ENCODE measurements at regions of chr7 and their contacts with region 1.

Region 1: GRCh38 chr7:50467817-50468610 is 17.9 kb upstream of the FIGNL1 start:
- DNase-seq: peak; percentile 85
- H3K4me3 Mint-ChIP-seq: no peak overlapping the region
- H3K27ac Mint-ChIP-seq: no peak overlapping the region
- H3K4me1 Mint-ChIP-seq: peaks cover 13% of the 10 kb centered on the region
- H3K27me3 Mint-ChIP-seq: peaks cover 1% of the 10 kb centered on the region

Region 2: DNA sequence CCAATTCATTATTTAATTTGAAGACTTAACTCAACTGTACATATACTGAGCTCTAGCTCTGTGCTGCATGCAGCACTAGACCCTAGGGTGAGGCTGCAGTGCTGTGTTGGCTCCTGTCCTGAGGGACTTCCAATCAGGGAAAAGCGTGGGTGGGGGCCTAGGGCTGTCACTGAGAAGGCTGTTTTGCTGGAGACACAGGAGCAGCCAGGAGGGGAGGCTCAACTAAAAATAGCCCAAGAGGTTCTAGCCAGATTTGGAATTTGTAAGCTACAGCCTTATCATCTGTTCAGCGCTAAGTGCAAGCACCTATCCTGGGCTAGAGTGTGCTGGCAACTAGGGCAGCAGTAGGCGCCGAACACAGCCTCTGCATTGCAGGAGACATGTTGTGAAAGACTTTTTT is 573.5 kb before region 1 on chr7:
- CTCF ChIA-PET with region 1: no interaction called
- POLR2A ChIA-PET with region 1: no interaction called
- DNase-seq: no peak
- H3K4me3 Mint-ChIP-seq: no peak overlapping the region
- H3K27ac Mint-ChIP-seq: no peak overlapping the region
- H3K4me1 Mint-ChIP-seq: no peaks in the 10 kb centered on the region
- H3K27me3 Mint-ChIP-seq: no peaks in the 10 kb centered on the region

Region 3: DNA sequence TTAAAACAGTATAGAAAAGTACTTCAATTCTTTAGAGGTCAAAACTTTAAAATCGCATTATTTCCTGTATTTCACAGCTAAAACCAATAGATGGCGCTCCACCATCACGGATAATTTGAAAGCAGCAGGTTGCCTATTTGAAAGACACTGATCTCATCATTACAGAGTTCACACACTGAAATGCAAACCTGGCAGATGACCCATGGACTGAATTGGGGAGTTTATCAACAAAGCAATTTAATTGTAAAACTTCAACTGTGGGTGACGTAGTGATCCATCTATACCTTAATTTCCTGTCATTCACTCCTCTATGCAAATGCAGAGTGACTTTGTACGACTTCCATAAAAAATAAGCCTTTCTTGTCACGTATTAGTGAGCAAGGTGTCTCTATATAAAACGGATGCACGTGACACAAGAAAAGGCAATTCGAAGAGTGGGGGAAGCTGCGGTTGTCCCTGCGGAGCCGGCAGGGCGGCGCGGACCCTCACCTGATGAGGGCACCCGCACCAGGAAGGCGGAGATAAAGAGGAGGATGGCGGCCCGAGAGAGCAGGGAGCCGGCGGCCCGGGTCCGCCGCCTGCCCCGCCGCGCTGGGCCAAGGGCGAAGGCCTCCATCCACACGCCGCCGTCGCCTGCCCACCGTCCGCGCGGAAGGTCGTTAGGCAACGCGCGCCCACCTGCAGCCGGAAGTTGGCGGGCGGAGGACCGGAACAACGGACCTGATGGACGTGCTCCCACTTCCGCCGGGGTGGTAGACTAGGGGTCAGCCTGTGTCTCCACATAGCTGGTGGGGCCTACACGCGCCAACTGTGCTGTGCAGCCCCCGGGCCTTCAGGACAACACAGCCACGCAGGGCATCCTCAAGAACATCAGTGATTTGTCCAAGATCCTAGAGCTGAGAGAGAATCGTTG is 375.2 kb before region 1 on chr7 and contains the start of gene ZPBP:
- CTCF ChIA-PET with region 1: interaction called, 25 read pairs
- POLR2A ChIA-PET with region 1: no interaction called
- DNase-seq: peak; percentile 43
- H3K4me3 Mint-ChIP-seq: peak within 1 kb of the TSS; percentile 73
- H3K27ac Mint-ChIP-seq: peak within 1 kb of the TSS; percentile 47
- H3K4me1 Mint-ChIP-seq: peaks cover 4% of the 10 kb centered on the region
- H3K27me3 Mint-ChIP-seq: peaks cover 19% of the 10 kb centered on the region
- total RNA-seq, gene ZPBP: not detected

Region 4: DNA sequence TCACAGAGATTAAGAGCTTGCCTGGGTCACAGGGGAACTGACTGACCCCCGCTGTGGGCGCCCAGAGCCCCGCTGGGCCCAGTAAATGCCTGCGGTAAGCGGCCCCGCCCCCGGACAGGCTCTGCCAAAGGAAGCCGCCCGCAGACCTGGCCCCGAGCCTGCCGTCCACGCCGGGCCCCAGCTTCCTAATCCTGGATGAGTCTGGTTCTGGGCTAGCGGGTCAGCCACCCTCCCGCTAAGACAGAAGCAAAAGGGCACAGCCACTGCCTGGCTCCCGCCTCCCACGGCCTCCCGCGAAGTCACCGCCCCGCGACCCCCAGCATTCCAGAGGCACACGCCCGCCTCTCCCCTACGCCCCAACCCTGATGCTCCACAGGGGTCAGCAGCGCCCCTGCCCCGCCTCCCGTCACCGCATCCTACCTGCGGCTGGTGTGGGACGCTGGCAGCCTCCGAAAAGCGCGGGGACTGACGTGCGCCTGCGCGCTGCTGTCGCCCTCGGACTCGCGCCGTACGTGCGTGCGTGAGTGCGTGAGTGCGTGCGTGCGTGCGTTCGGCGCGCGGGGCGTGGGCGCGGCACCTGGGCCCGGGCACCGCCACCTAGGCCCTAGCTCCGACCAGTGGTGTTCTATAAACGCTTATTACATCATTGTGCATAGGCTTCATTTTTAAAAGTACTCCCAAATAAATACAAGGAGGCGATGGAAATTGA is 18.0 kb before region 1 on chr7 and contains the start of gene FIGNL1:
- CTCF ChIA-PET with region 1: interaction called, 21 read pairs
- POLR2A ChIA-PET with region 1: interaction called, 8 read pairs
- DNase-seq: peak; percentile 87
- H3K4me3 Mint-ChIP-seq: peak within 1 kb of the TSS; percentile 91
- H3K27ac Mint-ChIP-seq: peak within 1 kb of the TSS; percentile 61
- H3K4me1 Mint-ChIP-seq: peaks cover 46% of the 10 kb centered on the region
- H3K27me3 Mint-ChIP-seq: peaks cover 7% of the 10 kb centered on the region
- total RNA-seq, gene FIGNL1: 39.7 to 41.2 TPM

Region 5: DNA sequence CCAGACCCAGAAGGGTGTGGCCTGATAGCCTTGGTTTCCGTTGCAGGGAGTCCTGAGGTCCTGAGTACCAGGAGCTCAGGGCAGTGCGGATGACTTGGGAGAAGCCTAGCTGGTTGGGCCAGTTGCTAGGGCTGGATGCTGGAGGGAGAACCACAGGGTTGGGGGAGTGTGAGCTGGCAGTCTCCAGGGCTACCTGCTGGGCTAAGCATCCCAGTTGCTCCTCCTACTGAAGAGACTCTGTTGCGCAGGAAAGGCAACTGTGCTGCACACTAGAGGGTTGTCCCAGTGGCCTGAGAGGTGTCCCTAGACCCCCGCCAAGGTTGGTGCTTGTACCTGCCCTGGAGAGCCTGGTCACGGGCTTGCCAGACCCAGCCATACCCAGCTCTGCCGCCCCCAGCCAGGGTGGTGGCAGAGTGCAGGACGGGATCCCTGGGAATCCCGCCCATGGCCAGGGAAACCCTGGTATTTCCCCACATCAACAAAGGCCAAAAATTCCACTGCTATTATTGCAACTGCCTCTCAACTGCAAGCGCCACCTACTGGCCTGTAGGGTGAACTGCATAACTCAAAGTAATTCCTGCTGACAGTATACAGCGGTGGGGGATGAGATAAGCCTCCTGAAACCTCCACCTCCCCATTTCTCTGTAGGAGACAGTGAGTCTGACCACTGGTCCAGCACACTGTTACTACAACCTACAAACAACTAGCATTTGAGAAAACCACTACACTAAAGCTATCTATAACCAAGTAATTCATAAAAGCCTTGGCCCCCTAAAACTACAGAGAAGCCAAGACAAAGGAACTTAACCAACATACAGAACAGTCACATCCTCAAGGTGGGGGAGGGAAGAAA is 164.8 kb after region 1 on chr7:
- CTCF ChIA-PET with region 1: interaction called, 62 read pairs
- POLR2A ChIA-PET with region 1: no interaction called
- DNase-seq: peak; percentile 64
- H3K4me3 Mint-ChIP-seq: no peak overlapping the region
- H3K27ac Mint-ChIP-seq: no peak overlapping the region
- H3K4me1 Mint-ChIP-seq: peaks cover 11% of the 10 kb centered on the region
- H3K27me3 Mint-ChIP-seq: peaks cover 20% of the 10 kb centered on the region

Region 6: DNA sequence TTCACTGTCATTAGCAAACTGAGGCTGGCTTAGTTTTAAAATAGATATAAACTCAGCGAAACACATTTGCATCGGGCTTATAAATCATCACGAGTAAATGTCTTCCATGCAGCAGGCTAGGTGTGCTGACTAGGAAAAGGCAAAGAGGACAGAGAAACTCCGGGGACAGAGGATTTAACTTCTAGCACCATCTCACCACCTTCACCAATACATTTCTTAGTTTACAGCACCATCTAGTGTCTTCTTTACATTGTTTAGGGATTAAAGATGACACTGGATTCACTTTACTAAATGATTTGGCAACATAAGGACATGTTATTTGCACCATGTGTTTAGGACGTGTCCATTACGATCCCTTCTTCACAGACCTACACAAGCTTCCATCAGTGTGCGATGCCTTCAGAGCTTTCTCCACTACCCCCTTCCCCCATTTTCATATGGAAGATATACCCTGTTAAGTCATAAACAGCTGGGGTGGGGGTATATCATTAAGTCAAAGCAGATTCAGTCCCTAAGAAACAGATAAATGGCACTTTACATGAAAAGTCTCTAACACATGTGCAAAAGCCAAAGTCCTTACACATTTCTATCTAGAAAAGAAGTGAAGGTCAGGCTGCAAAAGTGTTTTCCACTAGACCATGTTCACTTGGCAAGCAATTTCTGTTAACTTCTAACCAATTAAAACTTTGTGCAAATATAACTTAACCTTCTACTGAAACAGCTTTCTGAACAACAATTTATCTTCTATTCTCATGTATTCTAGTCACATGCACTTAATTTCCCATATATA is 211.4 kb after region 1 on chr7:
- CTCF ChIA-PET with region 1: interaction called, 108 read pairs
- POLR2A ChIA-PET with region 1: interaction called, 4 read pairs
- DNase-seq: no peak
- H3K4me3 Mint-ChIP-seq: no peak overlapping the region
- H3K27ac Mint-ChIP-seq: no peak overlapping the region
- H3K4me1 Mint-ChIP-seq: peaks cover 2% of the 10 kb centered on the region
- H3K27me3 Mint-ChIP-seq: no peaks in the 10 kb centered on the region

Region 7: DNA sequence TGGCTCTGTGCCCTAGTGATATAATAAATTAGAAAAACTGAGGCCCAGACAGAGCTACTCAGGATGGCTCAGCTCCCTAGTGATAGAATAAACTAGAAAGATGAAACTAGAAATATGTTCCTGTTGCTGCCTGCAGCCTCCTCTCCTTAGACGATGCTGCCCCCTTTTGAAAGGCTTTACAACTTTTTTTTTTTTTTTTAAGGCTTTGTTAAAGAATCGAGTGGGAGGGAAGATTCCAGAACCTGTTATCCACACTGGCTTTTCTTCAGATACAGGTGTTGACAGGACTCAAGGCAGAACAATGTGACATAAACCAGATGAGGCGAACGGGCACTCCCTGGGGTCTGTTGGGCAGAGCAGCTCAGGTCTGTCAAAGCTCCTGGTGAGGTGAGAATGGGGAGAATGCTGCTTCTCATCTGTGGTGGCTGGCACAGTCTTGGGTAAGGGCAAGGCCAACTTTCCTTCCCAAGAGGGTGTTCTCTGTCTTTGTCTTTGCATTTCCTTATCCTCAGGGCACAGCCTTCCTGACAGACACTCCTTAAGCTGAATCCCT is 673.5 kb after region 1 on chr7:
- CTCF ChIA-PET with region 1: interaction called, 19 read pairs
- POLR2A ChIA-PET with region 1: no interaction called
- DNase-seq: no peak
- H3K4me3 Mint-ChIP-seq: no peak overlapping the region
- H3K27ac Mint-ChIP-seq: no peak overlapping the region
- H3K4me1 Mint-ChIP-seq: peaks cover 28% of the 10 kb centered on the region
- H3K27me3 Mint-ChIP-seq: peaks cover 13% of the 10 kb centered on the region

Region 8: GRCh38 chr7:51162724-51163329 is 694.8 kb after region 1 on chr7:
- CTCF ChIA-PET with region 1: interaction called, 28 read pairs
- POLR2A ChIA-PET with region 1: no interaction called
- DNase-seq: peak; percentile 78
- H3K4me3 Mint-ChIP-seq: no peak overlapping the region
- H3K27ac Mint-ChIP-seq: no peak overlapping the region
- H3K4me1 Mint-ChIP-seq: peaks cover 9% of the 10 kb centered on the region
- H3K27me3 Mint-ChIP-seq: peaks cover 32% of the 10 kb centered on the region